Heart left ventricle (tissue), 16 donors: ENCODE measurements at regions of chr12 and their contacts with region 1.

Region 1: GRCh38 chr12:50222275-50222795 is 55.2 kb upstream of the CERS5 start:
- DNase-seq: peak in 4 of 5 donors; percentile 45 to 62 (median 56)
- ATAC-seq: peak; percentile 71 to 91 (median 89)
- H3K4me3 ChIP-seq: peak overlapping the region; percentile 5 to 64 (median 50)
- H3K27ac ChIP-seq: peak overlapping the region; percentile 37 to 88 (median 74)
- H3K4me1 ChIP-seq: peaks cover 0 to 45% (median 12%) of the 10 kb centered on the region in 12 donors
- H3K27me3 ChIP-seq: no peaks in the 10 kb centered on the region
- CTCF ChIP-seq: peak in 8 of 12 donors; percentile 7 to 54 (median 31)
- POLR2A ChIP-seq: peak in 1 of 2 donors; percentile 19

Region 2: DNA sequence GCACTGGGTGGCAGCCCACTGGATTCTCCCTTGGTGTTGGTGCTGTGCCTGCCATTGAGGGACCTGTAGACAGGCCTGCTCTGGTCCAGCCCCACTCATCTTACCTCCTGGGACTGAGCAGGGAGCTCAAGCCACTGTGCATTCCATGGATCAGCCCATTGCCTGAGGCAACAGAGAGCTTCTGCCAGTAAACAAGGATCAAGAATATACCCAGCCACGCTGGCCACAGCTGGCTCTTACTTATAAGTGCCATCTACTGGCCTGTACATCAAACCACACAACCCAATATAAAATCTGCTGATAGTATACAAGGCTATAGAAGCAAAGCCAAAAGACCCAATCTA is 612.6 kb before region 1 on chr12:
- intact Hi-C with region 1: no loop called
- DNase-seq: no peak
- ATAC-seq: peak in 1 of 4 donors; percentile 11
- H3K4me3 ChIP-seq: no peak overlapping the region
- H3K27ac ChIP-seq: no peak overlapping the region
- H3K4me1 ChIP-seq: peaks cover 0 to 8% (median 0%) of the 10 kb centered on the region in 12 donors
- H3K27me3 ChIP-seq: no peaks in the 10 kb centered on the region
- CTCF ChIP-seq: no peak
- POLR2A ChIP-seq: no peak

Region 3: DNA sequence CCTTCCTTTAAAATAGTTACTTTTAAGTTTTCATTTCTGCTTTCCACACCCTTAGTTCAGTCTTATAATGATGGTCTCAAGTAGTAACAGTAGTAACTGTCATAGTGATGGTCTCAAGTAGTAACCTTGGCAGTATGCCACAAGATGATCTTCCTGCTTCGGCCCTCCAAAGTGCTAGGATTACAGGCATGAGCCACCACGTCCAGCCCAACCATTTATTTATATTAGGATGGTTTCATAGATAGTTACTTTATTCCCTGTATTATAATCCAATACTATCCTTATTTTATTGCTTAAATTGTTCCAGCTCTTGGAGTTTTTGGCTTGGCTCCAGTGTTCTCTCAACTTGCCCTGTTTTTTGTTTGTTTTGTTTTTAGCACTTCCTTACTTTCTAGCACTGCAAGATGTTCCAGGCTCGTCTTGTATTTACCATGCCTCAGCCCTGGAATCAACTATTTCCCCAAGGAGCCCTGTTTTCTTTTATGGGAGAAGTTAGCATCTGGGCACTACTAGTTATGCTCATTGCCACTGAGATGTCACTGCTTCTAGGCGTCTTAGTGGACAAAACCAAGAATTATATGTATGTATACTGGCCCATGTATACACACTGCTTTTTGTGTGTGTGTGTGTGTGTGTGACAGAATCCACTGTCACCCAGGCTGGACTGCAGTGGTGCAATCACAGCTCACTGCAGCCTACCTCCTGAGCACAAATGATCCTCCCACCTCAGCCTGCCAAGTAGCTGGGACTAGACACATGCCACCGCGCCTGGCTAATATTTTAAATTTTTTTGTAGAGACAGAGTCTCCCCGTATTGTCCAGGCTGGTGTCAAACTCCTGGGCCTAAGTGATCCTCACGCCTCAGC is 35.6 kb after region 1 on chr12:
- intact Hi-C with region 1: loop called in 1 of 10 experiments (anchors 5 kb)
- DNase-seq: peak in 3 of 5 donors; percentile 17 to 56 (median 37)
- ATAC-seq: peak; percentile 60 to 87 (median 76)
- H3K4me3 ChIP-seq: no peak overlapping the region
- H3K27ac ChIP-seq: peak overlapping the region; percentile 19 to 76 (median 52)
- H3K4me1 ChIP-seq: peaks cover 3 to 50% (median 27%) of the 10 kb centered on the region in 12 donors
- H3K27me3 ChIP-seq: no peaks in the 10 kb centered on the region
- CTCF ChIP-seq: no peak
- POLR2A ChIP-seq: no peak

Region 4: GRCh38 chr12:50302686-50303085 is 80.4 kb after region 1 on chr12:
- intact Hi-C with region 1: no loop called
- DNase-seq: no peak
- ATAC-seq: no peak
- H3K4me3 ChIP-seq: no peak overlapping the region
- H3K27ac ChIP-seq: no peak overlapping the region
- H3K4me1 ChIP-seq: peaks cover 0 to 9% (median 3%) of the 10 kb centered on the region in 12 donors
- H3K27me3 ChIP-seq: no peaks in the 10 kb centered on the region
- CTCF ChIP-seq: no peak
- POLR2A ChIP-seq: no peak